PC-3 (cell line): ENCODE measurements at regions of chr17 and their contacts with region 1.

Region 1: GRCh38 chr17:63171428-63172393 is 205.7 kb downstream of the TANC2 start:
- DNase-seq: peak; percentile 26
- ATAC-seq: peak; percentile 53
- H3K4me3 ChIP-seq: no peak overlapping the region
- H3K27ac ChIP-seq: no peak overlapping the region
- H3K4me1 ChIP-seq: peaks cover 13% of the 10 kb centered on the region
- H3K27me3 ChIP-seq: no peaks in the 10 kb centered on the region
- CTCF ChIP-seq: no peak

Region 2: DNA sequence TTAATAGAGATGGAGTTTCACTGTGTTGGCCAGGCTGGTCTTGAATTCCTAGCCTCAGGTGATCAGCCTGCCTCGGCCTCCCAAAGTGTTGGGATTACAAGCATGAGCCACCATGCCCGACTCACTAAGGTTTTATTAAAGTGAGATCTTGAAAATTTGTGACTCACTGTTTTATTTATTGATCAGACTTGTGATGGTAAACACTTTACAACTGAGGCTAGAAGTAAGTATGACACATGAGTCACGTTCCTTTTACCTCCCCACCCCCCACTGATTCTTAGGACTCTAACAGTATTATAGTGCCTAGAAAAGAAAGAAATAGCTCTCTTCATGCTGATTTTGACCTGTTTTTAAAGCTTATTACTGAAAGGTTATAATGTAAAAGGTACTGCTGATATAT is 45.1 kb before region 1 on chr17:
- CTCF ChIA-PET with region 1: interaction called, 3 read pairs
- POLR2A ChIA-PET with region 1: no interaction called
- intact Hi-C with region 1: loop called (anchors 2 kb)
- DNase-seq: peak; percentile 58
- ATAC-seq: peak; percentile 71
- H3K4me3 ChIP-seq: no peak overlapping the region
- H3K27ac ChIP-seq: no peak overlapping the region
- H3K4me1 ChIP-seq: peaks cover 10% of the 10 kb centered on the region
- H3K27me3 ChIP-seq: no peaks in the 10 kb centered on the region
- CTCF ChIP-seq: no peak